Dorsolateral prefrontal cortex (tissue), 120 donors: ENCODE measurements at regions of chr5 and their contacts with region 1.

Region 1: DNA sequence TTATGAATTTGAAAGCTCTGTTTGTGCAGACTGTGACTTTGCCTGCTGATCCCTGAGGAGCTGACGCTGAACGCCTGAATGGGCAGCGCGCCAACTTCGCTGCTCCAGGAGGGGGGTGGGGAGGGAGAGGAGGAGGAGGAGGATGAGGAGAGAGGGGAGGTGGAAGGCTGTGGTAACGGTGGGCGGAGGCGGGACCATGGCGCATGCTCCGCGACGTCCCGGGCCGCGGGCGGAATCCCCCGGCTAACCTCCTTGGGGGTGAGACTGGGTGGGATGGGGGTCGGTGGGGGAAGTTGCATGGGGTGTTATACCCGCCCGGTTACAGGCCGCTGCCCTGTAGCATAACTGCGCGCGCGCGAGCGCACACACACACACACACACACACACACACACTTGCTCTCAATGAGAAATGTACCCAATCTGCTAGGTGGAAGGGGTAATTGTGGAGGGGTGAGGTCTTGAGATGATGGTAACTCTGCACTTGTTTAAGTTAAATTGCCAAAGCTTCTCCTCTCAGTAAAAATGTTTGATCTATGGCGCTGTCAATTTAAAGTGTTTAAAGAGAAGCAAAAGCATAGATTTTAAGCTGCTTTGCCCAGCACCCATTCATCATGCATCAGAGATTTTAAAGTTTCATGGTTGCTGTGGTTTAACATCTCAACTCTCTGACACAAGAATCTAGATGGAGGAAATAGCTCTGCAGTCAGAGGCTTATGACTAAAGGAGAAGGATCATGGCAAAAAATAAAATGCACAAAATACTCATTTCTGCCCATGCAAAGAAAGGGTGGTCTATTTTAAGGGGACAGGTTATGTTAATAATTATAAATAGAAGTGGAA is 76.6 kb upstream of the TBCA start:
- DNase-seq: peak; percentile 54 to 83 (median 67)
- H3K4me3 ChIP-seq: peak overlapping the region; percentile 41 to 78 (median 67)
- H3K27ac ChIP-seq: peak overlapping the region in 58 of 59 donors; percentile 1 to 94 (median 81)
- H3K27me3 ChIP-seq: peaks cover 0 to 12% (median 0%) of the 10 kb centered on the region in 45 donors
- CTCF ChIP-seq: peak in 1 of 56 donors; percentile 7

Region 2: DNA sequence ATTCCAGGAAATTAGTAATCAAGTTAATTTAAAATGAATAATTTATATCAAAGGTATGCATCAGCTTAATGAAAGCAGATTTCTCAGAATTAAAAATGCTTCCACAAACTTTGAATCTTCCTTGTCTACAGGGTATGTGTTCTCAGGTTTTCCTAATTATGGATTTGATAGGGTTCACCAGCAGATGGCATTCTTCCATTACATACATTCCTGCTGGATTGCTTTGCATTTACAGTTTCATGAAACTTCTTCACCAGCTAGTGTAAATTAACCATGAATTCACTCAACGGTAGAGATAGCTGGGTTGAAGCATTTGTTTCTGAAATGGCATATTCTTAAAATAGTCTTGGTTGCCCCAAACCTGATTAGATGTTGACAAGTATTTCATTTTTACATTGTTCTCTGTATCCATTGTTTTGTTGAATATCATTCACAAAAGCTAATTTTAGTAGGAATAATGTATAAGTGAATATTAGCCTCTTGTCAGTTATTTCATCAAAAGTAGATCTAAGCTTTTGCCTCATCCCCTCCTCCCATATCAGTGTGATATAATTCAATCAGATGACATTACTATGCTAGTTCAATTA is 292.0 kb before region 1 on chr5:
- intact Hi-C with region 1: loop called in 1 of 2 experiments (anchors 5 kb)
- DNase-seq: no peak
- H3K4me3 ChIP-seq: no peak overlapping the region
- H3K27ac ChIP-seq: no peak overlapping the region
- H3K27me3 ChIP-seq: peaks cover 0 to 7% (median 0%) of the 10 kb centered on the region in 45 donors
- CTCF ChIP-seq: peak; percentile 45 to 83 (median 64)

Region 3: DNA sequence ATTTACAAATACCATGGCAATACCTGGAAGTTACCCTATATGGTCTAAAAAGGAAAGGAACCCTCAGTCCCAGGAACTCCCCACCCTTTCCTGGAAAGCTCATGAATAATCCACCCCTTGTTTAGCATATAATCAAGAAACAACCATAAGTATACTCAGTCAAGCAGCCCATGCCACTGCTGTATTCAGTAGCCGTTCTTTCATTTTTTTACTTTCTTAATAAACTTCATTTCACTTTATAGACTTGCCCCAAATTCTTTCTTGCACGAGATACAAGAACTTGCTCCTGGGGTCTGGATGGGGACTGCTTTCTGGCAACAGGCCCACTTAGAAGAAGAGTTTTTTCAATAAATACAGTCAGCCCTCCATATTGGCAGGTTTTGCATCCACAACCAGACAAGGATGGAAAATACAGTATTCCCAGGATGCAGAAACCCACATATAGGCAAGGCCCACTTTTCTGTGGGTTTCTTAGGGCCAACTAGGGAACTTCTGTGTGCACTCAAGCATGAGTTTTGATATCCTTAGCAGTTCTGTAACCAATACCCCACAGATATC is 73.8 kb before region 1 on chr5:
- intact Hi-C with region 1: no loop called
- DNase-seq: no peak
- H3K4me3 ChIP-seq: no peak overlapping the region
- H3K27ac ChIP-seq: no peak overlapping the region
- H3K27me3 ChIP-seq: no peaks in the 10 kb centered on the region
- CTCF ChIP-seq: no peak